ENCODE measurements at regions of chr12 and their contacts with region 1.

Region 1: DNA sequence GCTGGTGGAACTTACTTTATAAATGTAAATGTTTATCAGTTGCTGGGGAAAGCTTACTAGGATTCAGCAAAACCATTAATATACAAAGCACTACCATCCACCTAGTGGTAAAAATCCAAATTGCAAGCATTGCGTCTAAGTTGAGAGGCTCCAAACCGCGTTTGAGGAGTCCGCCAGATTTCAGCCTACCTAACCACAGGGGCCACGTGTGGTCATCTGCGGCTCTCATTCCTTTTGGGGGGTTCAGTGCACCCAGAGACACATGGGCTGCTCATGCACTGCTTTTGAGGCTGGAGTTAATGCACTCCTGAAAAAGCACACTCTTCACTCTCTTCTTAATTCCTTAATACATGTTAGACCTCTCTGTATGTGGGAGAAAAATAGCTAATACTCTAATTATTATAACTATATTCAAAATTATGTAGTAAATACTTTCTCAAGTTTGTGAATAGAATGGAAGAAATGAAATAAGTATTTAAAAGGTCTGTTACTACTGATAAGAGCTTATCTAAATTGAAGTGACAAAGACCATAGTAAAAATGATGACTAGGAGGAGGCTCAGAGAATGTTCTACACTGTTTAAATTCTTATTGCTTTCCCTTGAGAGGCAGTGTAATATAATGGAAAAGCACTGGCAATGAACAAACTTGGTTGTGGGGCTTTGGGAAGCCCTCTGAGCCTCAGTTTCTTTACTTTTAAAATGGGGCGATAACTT is 41.4 kb upstream of the MANSC4 start:
- DNase-seq: peak; percentile 50
- ATAC-seq: no peak
- H3K4me3 Mint-ChIP-seq: peak overlapping the region; percentile 48
- H3K27ac Mint-ChIP-seq: no peak overlapping the region
- H3K4me1 Mint-ChIP-seq: peaks cover 35% of the 10 kb centered on the region
- H3K27me3 Mint-ChIP-seq: peaks cover 68% of the 10 kb centered on the region

Region 2: GRCh38 chr12:27635349-27635972 is 186.0 kb before region 1 on chr12:
- CTCF ChIA-PET with region 1: no interaction called
- DNase-seq: no peak
- ATAC-seq: no peak
- H3K4me3 Mint-ChIP-seq: no peak overlapping the region
- H3K27ac Mint-ChIP-seq: no peak overlapping the region
- H3K4me1 Mint-ChIP-seq: peaks cover 20% of the 10 kb centered on the region
- H3K27me3 Mint-ChIP-seq: peaks cover 13% of the 10 kb centered on the region

Region 3: DNA sequence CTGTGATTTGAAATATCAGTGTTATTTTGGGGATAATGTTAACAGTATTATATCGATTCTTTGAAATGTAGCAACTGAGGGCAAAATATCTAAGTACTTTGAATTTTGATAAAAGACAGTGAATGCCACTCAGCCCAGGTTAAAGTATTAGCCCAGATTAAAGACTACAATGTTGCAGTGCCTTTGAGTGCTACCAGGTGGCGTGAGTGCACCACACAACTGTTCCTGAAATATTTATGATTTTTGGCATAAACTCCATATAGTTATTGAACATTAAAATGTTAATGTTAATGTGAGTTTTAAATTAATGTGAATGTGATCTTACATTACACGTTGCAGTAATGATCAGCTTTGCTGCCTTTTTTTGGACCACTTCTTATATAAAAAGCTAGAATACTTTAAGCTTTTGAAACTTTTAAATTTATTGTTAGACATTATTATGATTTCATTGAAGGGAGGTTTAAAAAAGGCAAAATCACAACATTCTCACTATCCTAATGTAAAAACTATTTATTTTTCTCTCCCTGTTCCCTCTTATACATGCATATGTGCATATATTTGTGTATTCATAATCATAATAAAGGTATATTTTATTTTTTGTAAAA is 88.3 kb before region 1 on chr12:
- CTCF ChIA-PET with region 1: interaction called, 12 read pairs
- DNase-seq: peak; percentile 50
- ATAC-seq: no peak
- H3K4me3 Mint-ChIP-seq: no peak overlapping the region
- H3K27ac Mint-ChIP-seq: no peak overlapping the region
- H3K4me1 Mint-ChIP-seq: peaks cover 3% of the 10 kb centered on the region
- H3K27me3 Mint-ChIP-seq: no peaks in the 10 kb centered on the region

Region 4: DNA sequence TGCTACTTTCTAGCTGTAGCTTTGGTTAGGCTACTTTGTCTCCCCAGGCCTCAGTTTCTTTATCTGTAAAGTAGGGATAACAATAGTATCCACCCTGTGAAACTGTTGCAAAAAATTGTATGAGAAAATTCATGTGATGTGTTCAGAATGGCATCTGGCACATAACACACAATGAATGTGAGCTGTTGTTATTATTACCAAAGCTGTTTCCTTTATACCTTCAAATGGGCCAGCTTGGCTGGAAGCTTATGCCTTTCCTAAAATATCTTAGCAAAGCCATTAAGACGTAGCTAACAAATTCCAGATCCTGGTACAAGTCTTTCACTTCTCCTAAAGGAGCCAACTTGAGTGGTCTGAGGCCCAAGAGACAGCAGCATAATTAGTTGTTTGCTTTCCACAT is 16.2 kb before region 1 on chr12:
- CTCF ChIA-PET with region 1: interaction called, 16 read pairs
- DNase-seq: no peak
- ATAC-seq: no peak
- H3K4me3 Mint-ChIP-seq: no peak overlapping the region
- H3K27ac Mint-ChIP-seq: no peak overlapping the region
- H3K4me1 Mint-ChIP-seq: peaks cover 22% of the 10 kb centered on the region
- H3K27me3 Mint-ChIP-seq: peaks cover 37% of the 10 kb centered on the region

Measured in activated CD8-positive, alpha-beta memory T cell treated with anti-CD3 and anti-CD28 coated beads, Interleukin-2, amount 10 ng/mL, durations not matched to agents 7 days and 5 days (primary cell).